ENCODE measurements at regions of chr7 and their contacts with region 1.

Region 1: DNA sequence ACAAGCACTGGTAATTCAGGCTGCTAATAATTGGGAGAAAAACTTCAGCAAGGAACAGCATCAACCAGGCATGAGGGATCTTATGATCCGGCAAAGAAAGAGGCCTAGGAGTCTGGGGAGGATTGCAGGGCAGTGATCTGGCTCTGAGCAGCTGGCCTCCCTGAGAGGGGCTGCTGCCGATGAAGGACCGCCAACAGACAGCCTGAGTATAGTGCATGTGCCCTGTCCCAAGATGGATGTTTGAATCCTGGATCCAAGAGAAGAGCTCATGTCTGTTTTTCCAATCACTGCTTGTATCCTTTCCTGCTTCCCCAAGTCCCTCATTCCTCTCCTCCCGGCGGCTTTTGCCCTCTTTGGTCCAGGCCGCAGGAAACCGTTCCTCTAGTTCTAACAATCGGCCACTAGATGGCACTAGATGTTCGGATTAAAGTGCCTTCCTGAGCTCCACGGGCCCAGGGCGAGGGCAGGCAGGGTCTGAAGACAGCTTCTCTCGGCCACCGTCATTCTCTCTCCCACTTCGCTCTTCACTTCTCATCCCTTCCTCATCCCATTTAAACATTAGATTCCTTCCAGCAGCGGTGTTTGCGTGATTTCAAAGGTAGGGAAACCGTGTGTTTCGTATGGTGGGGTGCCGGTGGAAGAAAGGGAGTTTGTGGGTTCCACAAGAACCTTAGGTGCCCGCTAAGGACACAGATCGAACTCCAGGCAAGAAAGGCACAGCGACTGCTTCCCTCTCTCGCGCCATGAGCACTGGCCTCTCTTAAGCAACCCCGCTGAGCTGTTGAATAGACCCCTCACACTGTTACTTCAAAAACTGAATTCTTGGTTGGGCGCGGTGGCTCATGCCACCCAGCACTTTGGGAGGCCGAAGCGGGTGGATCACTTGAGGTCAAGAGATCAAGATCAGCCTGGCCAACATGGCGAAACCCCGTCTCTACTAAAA is 82.4 kb downstream of the ADCYAP1R1 start:
- DNase-seq: peak; percentile 80
- ATAC-seq: peak; percentile 99
- H3K4me3 Mint-ChIP-seq: peak overlapping the region; percentile 9
- H3K27ac Mint-ChIP-seq: no peak overlapping the region
- H3K4me1 Mint-ChIP-seq: peaks cover 5% of the 10 kb centered on the region
- H3K27me3 Mint-ChIP-seq: peaks cover 7% of the 10 kb centered on the region
- CTCF ChIP-seq: peak; percentile 77

Region 2: GRCh38 chr7:30556840-30557239 is 577.7 kb before region 1 on chr7:
- CTCF ChIA-PET with region 1: no interaction called
- POLR2A ChIA-PET with region 1: no interaction called
- DNase-seq: peak; percentile 47
- ATAC-seq: peak; percentile 84
- H3K4me3 Mint-ChIP-seq: no peak overlapping the region
- H3K27ac Mint-ChIP-seq: no peak overlapping the region
- H3K4me1 Mint-ChIP-seq: no peaks in the 10 kb centered on the region
- H3K27me3 Mint-ChIP-seq: no peaks in the 10 kb centered on the region; the same call in 1 of the 2 replicates
- CTCF ChIP-seq: no peak

Region 3: GRCh38 chr7:31058122-31058521 is 76.4 kb before region 1 on chr7:
- CTCF ChIA-PET with region 1: interaction called, 21 read pairs
- POLR2A ChIA-PET with region 1: no interaction called
- DNase-seq: no peak
- ATAC-seq: no peak
- H3K4me3 Mint-ChIP-seq: no peak overlapping the region
- H3K27ac Mint-ChIP-seq: no peak overlapping the region
- H3K4me1 Mint-ChIP-seq: peaks cover 34% of the 10 kb centered on the region
- H3K27me3 Mint-ChIP-seq: peaks cover 15% of the 10 kb centered on the region
- CTCF ChIP-seq: no peak

Region 4: GRCh38 chr7:31145339-31145738 is 10.8 kb after region 1 on chr7:
- CTCF ChIA-PET with region 1: interaction called, 17 read pairs
- POLR2A ChIA-PET with region 1: no interaction called
- DNase-seq: no peak
- ATAC-seq: peak; percentile 67
- H3K4me3 Mint-ChIP-seq: no peak overlapping the region
- H3K27ac Mint-ChIP-seq: no peak overlapping the region
- H3K4me1 Mint-ChIP-seq: no peaks in the 10 kb centered on the region
- H3K27me3 Mint-ChIP-seq: peaks cover 13% of the 10 kb centered on the region; the same call in 1 of the 2 replicates
- CTCF ChIP-seq: no peak

Region 5: DNA sequence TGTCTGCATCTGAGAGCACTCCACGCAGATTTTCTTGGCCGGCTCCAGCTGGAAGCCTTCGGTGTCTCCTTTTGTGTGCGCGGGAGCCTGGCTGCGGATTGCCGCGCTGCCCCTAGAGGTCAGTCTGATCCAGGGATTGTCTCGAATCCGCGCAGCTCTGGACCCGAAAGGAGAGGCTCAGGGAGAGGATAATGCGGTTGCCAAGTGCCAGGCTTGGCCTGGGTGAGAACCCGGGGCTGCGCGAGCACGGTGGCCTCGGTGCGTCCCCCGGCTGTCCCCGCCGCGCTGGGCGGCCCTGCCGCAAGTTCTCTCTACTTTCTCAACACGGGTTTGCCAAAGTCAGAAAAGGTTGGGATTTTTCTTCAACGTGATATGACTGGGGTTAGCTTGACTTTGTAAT is 58.5 kb after region 1 on chr7:
- CTCF ChIA-PET with region 1: interaction called, 12 read pairs
- POLR2A ChIA-PET with region 1: no interaction called
- DNase-seq: peak; percentile 87
- ATAC-seq: peak; percentile 100
- H3K4me3 Mint-ChIP-seq: no peak overlapping the region
- H3K27ac Mint-ChIP-seq: no peak overlapping the region
- H3K4me1 Mint-ChIP-seq: no peaks in the 10 kb centered on the region
- H3K27me3 Mint-ChIP-seq: peaks cover 21% of the 10 kb centered on the region
- CTCF ChIP-seq: peak; percentile 59

Region 6: DNA sequence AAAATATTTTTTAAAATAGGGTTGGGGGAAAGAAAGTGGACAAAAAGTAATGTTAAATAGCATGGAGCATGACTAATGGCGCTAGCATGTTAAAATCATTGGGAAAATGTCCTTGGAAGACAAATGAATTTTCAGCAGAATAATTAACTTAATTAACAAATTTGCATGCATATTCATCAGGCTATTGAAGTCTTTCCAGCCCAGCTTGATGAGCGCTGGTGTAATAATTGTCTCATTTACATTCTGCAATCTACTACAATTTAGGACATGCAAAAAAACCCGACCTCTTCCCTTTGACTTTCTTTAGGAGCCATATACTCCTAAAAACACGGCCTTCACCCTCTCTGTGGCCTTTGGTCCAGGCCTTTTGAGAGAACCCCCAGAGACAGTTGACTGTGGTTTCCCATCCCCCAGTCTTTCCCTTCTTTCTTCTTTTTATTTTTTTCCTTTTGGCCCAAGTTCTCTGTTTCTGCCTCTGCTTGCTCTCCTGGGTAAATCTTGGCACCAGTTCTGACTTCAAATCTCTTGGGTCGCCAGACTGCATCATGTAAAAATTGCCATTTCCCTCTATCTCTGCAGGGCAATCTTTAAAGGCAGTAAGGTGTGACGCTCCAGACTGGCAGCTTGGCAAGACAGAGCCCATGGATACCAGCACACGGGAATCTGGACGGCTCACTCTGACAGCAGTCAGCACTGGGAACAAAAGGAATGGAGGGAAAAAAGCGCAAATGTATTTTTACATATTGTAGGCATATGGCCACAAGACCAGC is 100.5 kb after region 1 on chr7:
- CTCF ChIA-PET with region 1: no interaction called
- POLR2A ChIA-PET with region 1: no interaction called
- DNase-seq: no peak
- ATAC-seq: no peak
- H3K4me3 Mint-ChIP-seq: no peak overlapping the region
- H3K27ac Mint-ChIP-seq: no peak overlapping the region
- H3K4me1 Mint-ChIP-seq: peaks cover 16% of the 10 kb centered on the region
- H3K27me3 Mint-ChIP-seq: no peaks in the 10 kb centered on the region
- CTCF ChIP-seq: no peak

Region 7: DNA sequence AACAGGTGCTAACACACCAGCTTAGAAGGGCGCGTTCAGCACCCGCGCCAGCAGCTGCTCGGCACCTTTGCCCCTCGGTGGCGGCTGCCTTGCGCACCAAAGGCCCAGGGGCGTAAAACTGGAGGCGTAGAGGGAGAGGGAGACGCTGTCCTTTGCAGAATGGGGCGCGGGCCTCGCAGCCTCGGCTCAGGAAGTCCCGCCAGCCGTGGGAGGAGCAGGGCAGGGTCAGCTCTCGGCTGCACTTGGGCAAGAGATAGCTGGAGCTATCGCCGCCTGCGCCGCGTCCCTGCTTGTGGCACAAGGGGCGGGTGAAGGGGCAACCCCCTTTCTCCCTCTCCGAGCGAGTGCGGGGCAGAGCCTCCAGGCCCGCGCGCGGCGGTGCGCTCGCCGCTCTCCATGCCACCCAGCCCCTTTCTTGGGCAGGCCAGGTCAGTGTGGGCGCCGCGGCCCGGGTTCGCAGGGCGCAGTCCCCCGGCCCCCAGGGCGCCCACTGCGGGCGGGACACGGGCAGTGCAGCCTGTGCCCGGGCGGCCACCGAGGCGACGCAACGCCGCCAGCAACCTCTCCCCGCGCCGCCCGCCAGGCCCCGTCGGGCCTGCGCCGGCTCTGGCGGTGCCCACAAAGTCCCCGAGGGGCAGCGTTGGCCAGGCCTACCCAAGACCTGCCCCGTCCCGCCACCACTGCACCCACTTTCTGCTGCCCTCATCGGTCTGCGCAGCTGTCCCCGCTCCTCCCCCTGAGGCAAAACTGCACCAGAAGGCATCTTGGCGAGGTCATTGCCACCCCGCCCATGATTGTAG is 201.9 kb after region 1 on chr7:
- CTCF ChIA-PET with region 1: interaction called, 25 read pairs
- POLR2A ChIA-PET with region 1: no interaction called
- DNase-seq: peak; percentile 66
- ATAC-seq: peak; percentile 87
- H3K4me3 Mint-ChIP-seq: peak overlapping the region; percentile 74
- H3K27ac Mint-ChIP-seq: no peak overlapping the region
- H3K4me1 Mint-ChIP-seq: 0 out of 2 replicates have a peak, but pooled peaks cover 2% of the 10 kb centered on the region
- H3K27me3 Mint-ChIP-seq: peaks cover 62% of the 10 kb centered on the region
- CTCF ChIP-seq: peak; percentile 69

Region 8: DNA sequence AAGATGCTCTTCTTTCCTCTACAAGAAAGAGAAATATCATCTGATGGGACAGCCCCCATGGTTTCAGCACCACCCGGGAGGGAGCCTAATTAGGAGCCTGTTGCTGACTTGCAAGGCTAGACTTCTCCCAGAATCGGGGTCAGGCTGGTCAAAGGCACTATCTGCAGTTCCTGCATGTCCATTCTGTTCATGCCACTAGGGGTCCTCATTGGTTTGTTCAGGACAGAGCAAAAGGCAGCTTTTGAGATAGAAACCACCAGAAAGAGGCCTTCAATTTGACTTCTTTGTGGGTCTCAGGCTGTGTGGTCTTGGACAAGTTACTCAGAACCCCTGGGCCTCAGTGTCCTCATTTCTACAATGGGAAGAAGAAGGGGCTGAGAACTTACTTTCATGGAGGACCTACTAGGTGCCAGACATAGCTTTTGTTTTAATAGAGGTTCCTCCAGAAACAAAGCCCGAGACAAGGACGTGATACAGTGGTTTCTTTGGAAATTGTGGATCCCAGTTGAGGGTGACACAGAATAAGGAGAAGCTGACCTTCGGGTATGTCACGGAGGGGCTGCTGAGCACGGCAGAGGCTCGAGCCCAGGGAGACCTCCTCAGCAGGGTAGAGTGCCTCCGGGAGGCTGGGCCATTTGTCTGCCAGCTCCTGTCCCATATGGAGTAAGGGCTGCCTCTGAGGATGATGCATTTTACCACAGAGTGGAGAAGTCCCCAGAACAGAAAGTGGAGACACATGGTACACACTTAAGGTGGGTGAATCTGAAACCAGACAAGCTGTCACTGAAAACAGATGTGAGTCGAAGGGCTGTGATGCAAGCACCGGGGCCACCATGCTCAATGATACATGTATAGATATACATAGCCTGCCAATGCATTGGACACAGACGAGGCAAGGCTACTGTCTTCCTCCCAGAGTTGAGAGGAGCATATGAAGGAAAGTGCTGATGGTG is 239.1 kb after region 1 on chr7:
- CTCF ChIA-PET with region 1: interaction called, 19 read pairs
- POLR2A ChIA-PET with region 1: no interaction called
- DNase-seq: peak; percentile 74
- ATAC-seq: peak; percentile 85
- H3K4me3 Mint-ChIP-seq: no peak overlapping the region
- H3K27ac Mint-ChIP-seq: no peak overlapping the region
- H3K4me1 Mint-ChIP-seq: peaks cover 44% of the 10 kb centered on the region
- H3K27me3 Mint-ChIP-seq: peaks cover 66% of the 10 kb centered on the region
- CTCF ChIP-seq: peak; percentile 67

Region 9: GRCh38 chr7:31633894-31634494 is 499.5 kb after region 1 on chr7:
- CTCF ChIA-PET with region 1: interaction called, 28 read pairs
- POLR2A ChIA-PET with region 1: no interaction called
- DNase-seq: peak; percentile 67
- ATAC-seq: peak; percentile 95
- H3K4me3 Mint-ChIP-seq: no peak overlapping the region
- H3K27ac Mint-ChIP-seq: no peak overlapping the region
- H3K4me1 Mint-ChIP-seq: peaks cover 5% of the 10 kb centered on the region
- H3K27me3 Mint-ChIP-seq: peaks cover 3% of the 10 kb centered on the region; the same call in 1 of the 2 replicates
- CTCF ChIP-seq: peak; percentile 41

Measured in WTC11 (cell line).